AG04449 (cell line): ENCODE measurements at regions of chr2 and their contacts with region 1.

Region 1: DNA sequence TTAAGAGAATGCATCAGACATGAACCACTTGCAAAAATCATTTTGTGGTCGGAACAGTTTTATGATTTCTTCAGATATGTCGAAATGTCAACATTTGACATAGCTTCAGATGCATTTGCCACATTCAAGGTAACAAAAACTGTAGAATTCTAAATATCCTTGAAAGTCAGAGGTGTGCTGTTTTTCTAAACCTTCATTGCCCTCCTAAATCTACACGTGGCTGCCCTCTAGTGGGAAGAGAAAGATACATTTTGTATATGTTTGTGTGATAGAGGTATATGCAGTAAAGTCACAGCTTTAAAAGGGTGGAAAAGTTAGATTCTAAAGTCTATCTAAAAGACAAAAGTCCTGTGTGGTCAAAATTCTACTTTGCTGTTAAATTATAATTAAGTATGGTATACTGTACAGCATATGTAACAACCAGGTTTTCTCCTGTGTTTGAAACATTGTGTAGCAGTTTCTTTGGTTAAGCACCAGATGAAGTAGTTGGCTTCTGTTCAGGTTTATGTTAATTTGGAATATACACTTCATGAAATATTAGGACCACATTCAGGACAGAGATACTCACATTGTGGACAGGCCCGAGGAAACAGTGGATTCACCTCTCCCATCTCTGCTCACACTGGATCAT is 65.9 kb upstream of the ITM2C start:
- DNase-seq: no peak
- H3K4me3 ChIP-seq: no peak overlapping the region
- CTCF ChIP-seq: peak; percentile 69

Region 2: GRCh38 chr2:230614913-230615332 is 184.0 kb before region 1 on chr2:
- CTCF ChIA-PET with region 1: interaction called, 20 read pairs
- POLR2A ChIA-PET with region 1: no interaction called
- DNase-seq: no peak
- H3K4me3 ChIP-seq: no peak overlapping the region
- CTCF ChIP-seq: no peak

Region 3: GRCh38 chr2:230706053-230706521 is 92.8 kb before region 1 on chr2:
- CTCF ChIA-PET with region 1: interaction called, 80 read pairs
- POLR2A ChIA-PET with region 1: no interaction called
- DNase-seq: no peak
- H3K4me3 ChIP-seq: no peak overlapping the region
- CTCF ChIP-seq: no peak

Region 4: DNA sequence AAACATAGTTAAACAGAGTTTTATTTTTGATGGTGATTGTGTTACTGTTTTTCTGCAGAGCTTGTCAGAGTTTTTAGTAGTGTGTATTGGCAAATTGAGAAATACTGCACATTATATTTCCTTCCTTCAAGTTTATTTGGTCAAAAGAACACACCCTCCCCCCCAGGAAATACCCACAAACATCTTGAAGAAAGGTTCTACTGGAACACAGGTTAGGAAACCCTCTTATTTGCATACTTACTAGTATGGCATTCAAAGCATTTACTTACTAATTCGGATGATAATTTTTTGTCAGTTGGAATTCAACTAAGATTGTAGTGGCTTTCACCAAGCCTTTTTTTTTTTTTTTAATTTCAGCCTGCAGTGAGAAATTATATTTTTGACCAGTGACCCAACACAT is 77.2 kb before region 1 on chr2:
- CTCF ChIA-PET with region 1: interaction called, 80 read pairs
- POLR2A ChIA-PET with region 1: no interaction called
- DNase-seq: no peak
- H3K4me3 ChIP-seq: no peak overlapping the region
- CTCF ChIP-seq: no peak

Region 5: GRCh38 chr2:230814616-230815015 is 15.7 kb after region 1 on chr2:
- CTCF ChIA-PET with region 1: interaction called, 34 read pairs
- POLR2A ChIA-PET with region 1: no interaction called
- DNase-seq: no peak
- H3K4me3 ChIP-seq: no peak overlapping the region
- CTCF ChIP-seq: no peak